Activated CD4-positive, alpha-beta memory T cell treated with anti-CD3 and anti-CD28 coated beads for 36 hours (primary cell): ENCODE measurements at regions of chr7 and their contacts with region 1.

Region 1: DNA sequence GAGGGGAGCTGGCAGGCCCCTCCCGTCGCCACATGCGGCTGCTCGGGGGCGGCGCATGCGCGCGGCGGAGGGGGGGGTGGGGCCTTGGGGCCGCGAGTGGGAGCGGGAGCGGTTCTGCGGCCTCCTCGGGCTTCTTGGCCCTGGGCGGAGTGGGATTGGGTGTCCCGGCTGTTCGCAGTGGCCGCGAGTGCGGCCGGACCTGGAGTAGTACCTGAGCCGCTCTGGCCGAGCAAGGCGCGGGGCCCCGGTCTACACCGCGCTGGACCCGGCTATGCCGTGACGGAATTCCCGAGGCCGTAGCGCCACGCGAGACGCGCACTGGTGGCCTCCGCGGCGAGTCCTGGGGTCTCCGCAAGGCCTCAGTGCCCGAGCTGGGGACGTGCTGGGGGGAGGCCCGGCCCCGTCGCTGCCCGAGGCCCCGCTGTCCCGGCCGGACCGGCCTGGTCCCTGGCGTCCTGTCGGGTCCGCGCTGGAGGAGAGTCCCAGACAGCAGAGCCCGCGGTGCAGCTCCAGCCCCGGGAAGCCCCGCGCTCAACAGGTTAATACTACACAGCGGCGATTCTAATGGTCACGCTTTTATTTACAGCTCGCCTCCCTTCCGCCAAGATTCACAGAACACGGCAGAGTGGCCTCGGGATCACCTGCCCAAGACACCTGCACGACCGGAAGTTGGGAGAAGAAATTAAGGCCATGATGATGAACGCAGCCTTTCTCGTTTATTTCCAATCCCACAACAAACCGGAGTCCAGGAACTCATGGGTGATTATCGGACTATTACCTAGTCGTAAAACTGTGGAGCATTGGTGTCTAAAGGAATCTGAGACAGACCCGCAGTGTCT is 671 bp upstream of the PAXIP1 start:
- DNase-seq: peak; percentile 89
- H3K4me3 Mint-ChIP-seq: peak overlapping the region; percentile 89
- H3K27ac Mint-ChIP-seq: peak overlapping the region; percentile 91
- H3K4me1 Mint-ChIP-seq: peaks cover 12% of the 10 kb centered on the region
- H3K27me3 Mint-ChIP-seq: no peaks in the 10 kb centered on the region

Region 2: DNA sequence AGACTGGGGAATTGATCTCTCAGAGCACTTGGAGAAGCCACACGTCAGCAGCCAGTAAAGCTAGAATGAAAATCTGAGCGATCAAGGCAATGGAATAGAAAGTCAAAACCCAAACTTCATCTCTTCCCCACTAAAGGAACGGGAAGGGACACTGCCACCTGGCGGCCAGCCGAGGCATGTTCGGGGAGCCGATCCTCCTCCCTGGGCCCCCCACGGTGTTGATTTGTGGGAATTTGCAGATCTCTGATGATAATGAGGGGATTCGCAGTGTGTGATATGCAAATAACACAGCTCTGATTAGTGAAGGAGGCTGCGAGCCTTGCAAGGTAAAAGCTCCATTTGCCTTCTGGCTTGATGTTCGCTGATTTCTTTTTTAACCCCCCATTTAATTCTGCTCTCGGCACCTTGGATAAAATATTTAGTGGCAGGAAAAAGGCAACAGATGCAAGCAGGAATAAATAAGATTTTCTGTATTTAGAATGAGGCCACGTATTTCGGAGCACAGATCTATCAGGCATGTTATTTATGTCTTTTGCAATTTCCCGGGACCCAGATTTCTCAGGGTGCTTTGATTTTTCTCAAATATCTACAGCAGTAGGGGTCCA is 259.2 kb before region 1 on chr7:
- CTCF ChIA-PET with region 1: no interaction called
- POLR2A ChIA-PET with region 1: no interaction called
- intact Hi-C with region 1: no loop called
- DNase-seq: peak; percentile 40
- H3K4me3 Mint-ChIP-seq: no peak overlapping the region
- H3K27ac Mint-ChIP-seq: no peak overlapping the region
- H3K4me1 Mint-ChIP-seq: no peaks in the 10 kb centered on the region
- H3K27me3 Mint-ChIP-seq: peaks cover 9% of the 10 kb centered on the region

Region 3: DNA sequence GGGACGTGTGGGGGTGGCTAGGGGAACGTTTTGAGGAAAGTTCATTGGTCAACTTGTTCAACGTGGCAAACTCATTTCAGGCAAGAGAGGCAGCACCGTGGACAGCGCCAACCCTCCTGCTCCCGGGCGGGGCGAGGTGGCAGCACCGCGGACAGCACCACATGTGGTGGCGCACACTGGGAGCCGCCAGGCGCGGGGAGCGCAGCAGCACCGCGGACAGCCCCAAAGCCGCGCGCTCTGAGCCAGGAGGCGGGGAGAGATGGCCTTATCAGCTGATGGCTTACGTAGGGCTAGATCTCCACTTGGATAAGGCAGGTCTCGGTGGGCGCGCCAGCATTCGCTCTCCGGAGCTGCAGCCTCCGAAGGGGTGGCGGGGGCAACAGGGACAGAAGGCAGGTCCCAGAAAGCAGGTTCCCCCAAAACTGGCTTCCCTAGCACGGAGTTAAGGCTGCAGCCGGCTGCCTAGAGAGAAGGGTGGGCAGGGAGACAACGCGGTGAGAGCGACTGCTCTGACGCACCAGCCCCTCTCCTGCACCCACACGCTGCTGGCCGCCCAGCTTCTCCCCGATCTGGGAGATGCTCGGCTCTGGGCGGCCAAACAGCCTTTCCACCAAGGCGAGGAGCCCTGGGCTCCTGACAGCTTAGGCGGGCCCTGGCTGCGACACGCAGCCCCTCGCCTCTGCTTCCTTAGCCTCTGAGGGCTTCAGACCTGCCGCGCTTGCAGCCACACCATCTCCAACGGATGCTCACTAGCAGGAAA is 66.6 kb after region 1 on chr7 and contains the start of gene HTR5A:
- CTCF ChIA-PET with region 1: no interaction called
- POLR2A ChIA-PET with region 1: no interaction called
- intact Hi-C with region 1: loop called (anchors 1 kb)
- DNase-seq: peak; percentile 88
- H3K4me3 Mint-ChIP-seq: no peak within 1 kb of the TSS
- H3K27ac Mint-ChIP-seq: no peak within 1 kb of the TSS
- H3K4me1 Mint-ChIP-seq: no peaks in the 10 kb centered on the region
- H3K27me3 Mint-ChIP-seq: peaks cover 40% of the 10 kb centered on the region
- total RNA-seq, gene HTR5A: not detected

Region 4: DNA sequence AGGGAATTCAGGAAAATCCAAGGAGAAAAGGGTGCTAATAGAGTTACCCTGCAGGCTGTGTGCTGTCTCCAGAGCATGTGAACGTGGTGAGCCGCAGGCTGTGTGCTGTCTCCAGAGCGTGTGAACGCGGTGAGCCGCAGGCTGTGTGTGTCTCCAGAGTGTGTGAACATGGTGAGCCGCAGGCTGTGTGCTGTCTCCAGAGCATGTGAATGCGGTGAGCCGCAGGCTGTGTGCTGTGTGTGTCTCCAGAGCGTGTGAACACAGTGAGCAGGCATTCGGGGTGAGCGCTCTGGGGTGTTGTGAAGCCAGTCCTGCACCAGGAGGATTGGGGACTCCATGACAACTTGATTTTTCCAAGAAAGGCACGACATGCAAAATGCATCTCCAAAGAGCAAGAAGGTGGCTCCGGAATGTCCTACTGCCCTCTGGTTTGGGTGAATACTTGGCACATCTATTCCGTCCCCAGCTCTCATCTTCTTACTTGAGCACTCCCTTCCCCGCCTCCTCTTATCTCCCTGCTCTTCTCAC is 1216.5 kb after region 1 on chr7:
- CTCF ChIA-PET with region 1: no interaction called
- POLR2A ChIA-PET with region 1: no interaction called
- intact Hi-C with region 1: no loop called
- DNase-seq: no peak
- H3K4me3 Mint-ChIP-seq: no peak overlapping the region
- H3K27ac Mint-ChIP-seq: no peak overlapping the region
- H3K4me1 Mint-ChIP-seq: no peaks in the 10 kb centered on the region
- H3K27me3 Mint-ChIP-seq: no peaks in the 10 kb centered on the region